ENCODE measurements at regions of chr5 and their contacts with region 1.

Region 1: GRCh38 chr5:157948738-157949410 is 89.9 kb upstream of the CLINT1 start:
- DNase-seq: peak; percentile 85
- H3K4me3 ChIP-seq: no peak overlapping the region
- H3K27ac ChIP-seq: no peak overlapping the region
- H3K27me3 ChIP-seq: no peaks in the 10 kb centered on the region
- CTCF ChIP-seq: peak; percentile 94

Region 2: GRCh38 chr5:156036640-156037039 is 1912.2 kb before region 1 on chr5:
- CTCF ChIA-PET with region 1: no interaction called
- POLR2A ChIA-PET with region 1: no interaction called
- DNase-seq: no peak
- H3K4me3 ChIP-seq: no peak overlapping the region
- H3K27ac ChIP-seq: no peak overlapping the region
- H3K27me3 ChIP-seq: no peaks in the 10 kb centered on the region
- CTCF ChIP-seq: no peak

Region 3: DNA sequence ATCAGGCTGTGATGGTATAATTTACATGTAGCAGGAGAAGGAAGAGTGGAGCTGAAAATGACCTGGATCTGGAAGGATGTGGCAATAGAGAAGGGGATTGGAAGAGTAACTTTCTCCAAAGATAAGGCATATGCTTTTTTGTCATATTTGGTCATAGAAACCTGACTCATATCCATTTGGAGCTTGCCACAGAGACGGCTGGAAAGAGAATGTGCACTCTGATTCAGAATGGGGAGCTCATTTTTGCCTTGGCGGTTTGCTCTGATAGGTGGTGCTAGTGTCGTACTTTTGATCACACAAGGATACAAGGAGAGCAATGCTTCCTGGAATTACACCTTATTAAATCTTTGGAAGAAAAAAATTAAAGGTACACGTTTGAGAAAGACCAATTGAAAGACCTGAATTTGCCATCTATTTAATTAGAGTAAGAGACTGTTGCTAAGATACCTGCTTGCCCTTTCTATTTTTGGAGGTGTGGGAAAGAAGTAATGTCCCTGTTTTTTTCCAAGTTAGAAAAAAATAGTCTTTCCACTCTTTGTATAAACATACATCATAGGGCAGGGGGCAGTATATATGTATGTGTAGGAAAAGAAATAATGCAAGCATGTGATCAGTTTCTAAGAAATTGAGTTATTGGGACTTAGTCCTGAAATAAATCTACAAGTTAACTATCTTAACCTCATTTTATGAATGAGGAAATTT is 200.0 kb before region 1 on chr5:
- CTCF ChIA-PET with region 1: interaction called, 12 read pairs
- POLR2A ChIA-PET with region 1: no interaction called
- DNase-seq: peak; percentile 56
- H3K4me3 ChIP-seq: no peak overlapping the region
- H3K27ac ChIP-seq: peak overlapping the region; percentile 77
- H3K27me3 ChIP-seq: no peaks in the 10 kb centered on the region
- CTCF ChIP-seq: no peak

Region 4: GRCh38 chr5:157800137-157800536 is 148.7 kb before region 1 on chr5:
- CTCF ChIA-PET with region 1: interaction called, 10 read pairs
- POLR2A ChIA-PET with region 1: no interaction called
- DNase-seq: no peak
- H3K4me3 ChIP-seq: no peak overlapping the region
- H3K27ac ChIP-seq: no peak overlapping the region
- H3K27me3 ChIP-seq: no peaks in the 10 kb centered on the region
- CTCF ChIP-seq: no peak

Region 5: GRCh38 chr5:157835041-157835440 is 113.8 kb before region 1 on chr5:
- CTCF ChIA-PET with region 1: interaction called, 11 read pairs
- POLR2A ChIA-PET with region 1: no interaction called
- DNase-seq: no peak
- H3K4me3 ChIP-seq: no peak overlapping the region
- H3K27ac ChIP-seq: no peak overlapping the region
- H3K27me3 ChIP-seq: no peaks in the 10 kb centered on the region
- CTCF ChIP-seq: no peak

Region 6: GRCh38 chr5:157923765-157924164 is 25.1 kb before region 1 on chr5:
- CTCF ChIA-PET with region 1: interaction called, 17 read pairs
- POLR2A ChIA-PET with region 1: no interaction called
- DNase-seq: no peak
- H3K4me3 ChIP-seq: no peak overlapping the region
- H3K27ac ChIP-seq: no peak overlapping the region
- H3K27me3 ChIP-seq: no peaks in the 10 kb centered on the region
- CTCF ChIP-seq: no peak

Region 7: GRCh38 chr5:157994906-157995519 is 46.1 kb after region 1 on chr5:
- CTCF ChIA-PET with region 1: interaction called, 18 read pairs
- POLR2A ChIA-PET with region 1: interaction called, 8 read pairs
- DNase-seq: peak; percentile 18
- H3K4me3 ChIP-seq: no peak overlapping the region
- H3K27ac ChIP-seq: no peak overlapping the region
- H3K27me3 ChIP-seq: no peaks in the 10 kb centered on the region
- CTCF ChIP-seq: peak; percentile 80